ENCODE measurements at regions of chr12 and their contacts with region 1.

Region 1: GRCh38 chr12:53267999-53268647 is at the start of gene ESPL1:
- DNase-seq: peak; percentile 81
- H3K4me3 Mint-ChIP-seq: peak within 1 kb of the TSS; percentile 90
- H3K27ac Mint-ChIP-seq: peak within 1 kb of the TSS; percentile 88
- H3K4me1 Mint-ChIP-seq: peaks cover 43% of the 10 kb centered on the region
- H3K27me3 Mint-ChIP-seq: no peaks in the 10 kb centered on the region
- total RNA-seq, gene ESPL1: 61.2 and 68.4 TPM in 2 replicates

Region 2: GRCh38 chr12:52980693-52981423 is 287.3 kb before region 1 on chr12:
- intact Hi-C with region 1: no loop called
- DNase-seq: peak; percentile 73
- H3K4me3 Mint-ChIP-seq: no peak overlapping the region
- H3K27ac Mint-ChIP-seq: no peak overlapping the region
- H3K4me1 Mint-ChIP-seq: no peaks in the 10 kb centered on the region
- H3K27me3 Mint-ChIP-seq: peaks cover 29% of the 10 kb centered on the region

Region 3: GRCh38 chr12:53180220-53180930 is 87.7 kb before region 1 on chr12 and contains the starts of genes CSAD and ZNF740:
- intact Hi-C with region 1: loop called (anchors 1 kb)
- DNase-seq: peak; percentile 97
- H3K4me3 Mint-ChIP-seq: peak within 1 kb of the TSS; percentile 88
- H3K27ac Mint-ChIP-seq: peak within 1 kb of the TSS; percentile 99
- H3K4me1 Mint-ChIP-seq: peaks cover 52% of the 10 kb centered on the region
- H3K27me3 Mint-ChIP-seq: no peaks in the 10 kb centered on the region
- total RNA-seq, gene CSAD: 21.7 and 22.6 TPM in 2 replicates
- total RNA-seq, gene ZNF740: 48.1 and 52.8 TPM in 2 replicates

Region 4: GRCh38 chr12:53220801-53221202 is 47.3 kb before region 1 on chr12:
- intact Hi-C with region 1: loop called (anchors 1 kb)
- DNase-seq: peak; percentile 83
- H3K4me3 Mint-ChIP-seq: peak overlapping the region; percentile 94
- H3K27ac Mint-ChIP-seq: peak overlapping the region; percentile 98
- H3K4me1 Mint-ChIP-seq: peaks cover 83% of the 10 kb centered on the region
- H3K27me3 Mint-ChIP-seq: peaks cover 2% of the 10 kb centered on the region

Region 5: DNA sequence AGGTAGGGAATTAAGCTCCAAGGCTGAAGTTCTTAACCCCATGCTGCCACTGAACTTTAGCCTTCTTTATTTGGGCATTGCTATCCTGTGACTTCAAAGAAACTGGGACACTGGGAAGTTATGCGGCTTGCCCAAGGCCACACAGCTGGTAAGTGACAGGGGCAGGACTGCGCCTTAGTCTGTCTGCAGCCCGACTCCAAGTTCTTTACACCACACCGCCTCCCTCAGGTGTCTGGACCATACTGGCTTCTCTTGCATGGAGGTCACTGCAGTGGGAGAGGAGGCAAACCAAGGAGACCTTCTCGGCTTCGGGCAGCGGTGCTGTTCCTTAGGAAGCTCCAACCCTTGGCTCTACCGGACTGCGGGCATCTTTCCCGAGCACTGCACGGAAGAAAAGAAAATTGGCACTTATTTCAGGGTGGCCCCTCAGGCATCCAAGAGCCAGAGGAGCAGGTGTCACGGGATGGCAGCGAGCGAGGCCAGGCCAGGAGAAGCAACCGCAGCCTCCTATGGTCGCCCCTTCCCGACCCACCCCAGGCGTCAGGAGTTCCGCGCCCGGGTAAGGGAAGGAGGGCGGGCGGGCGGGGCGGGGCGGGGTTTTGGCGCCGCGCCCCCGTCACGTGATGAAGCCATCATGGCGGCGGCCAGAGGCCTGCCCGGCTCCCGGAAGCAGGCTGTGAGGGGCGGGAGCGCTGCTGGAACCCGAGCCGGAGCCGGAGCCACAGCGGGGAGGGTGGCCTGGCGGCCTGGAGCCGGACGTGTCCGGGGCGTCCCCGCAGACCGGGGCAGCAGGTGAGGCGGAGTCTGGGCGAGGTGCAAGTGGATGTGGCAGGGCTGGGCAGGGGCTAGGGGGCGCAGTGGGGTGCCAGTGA is 16.4 kb before region 1 on chr12:
- intact Hi-C with region 1: loop called (anchors 1 kb)
- DNase-seq: peak; percentile 69
- H3K4me3 Mint-ChIP-seq: peak overlapping the region; percentile 99
- H3K27ac Mint-ChIP-seq: peak overlapping the region; percentile 88
- H3K4me1 Mint-ChIP-seq: peaks cover 50% of the 10 kb centered on the region
- H3K27me3 Mint-ChIP-seq: peaks cover 2% of the 10 kb centered on the region

Region 6: DNA sequence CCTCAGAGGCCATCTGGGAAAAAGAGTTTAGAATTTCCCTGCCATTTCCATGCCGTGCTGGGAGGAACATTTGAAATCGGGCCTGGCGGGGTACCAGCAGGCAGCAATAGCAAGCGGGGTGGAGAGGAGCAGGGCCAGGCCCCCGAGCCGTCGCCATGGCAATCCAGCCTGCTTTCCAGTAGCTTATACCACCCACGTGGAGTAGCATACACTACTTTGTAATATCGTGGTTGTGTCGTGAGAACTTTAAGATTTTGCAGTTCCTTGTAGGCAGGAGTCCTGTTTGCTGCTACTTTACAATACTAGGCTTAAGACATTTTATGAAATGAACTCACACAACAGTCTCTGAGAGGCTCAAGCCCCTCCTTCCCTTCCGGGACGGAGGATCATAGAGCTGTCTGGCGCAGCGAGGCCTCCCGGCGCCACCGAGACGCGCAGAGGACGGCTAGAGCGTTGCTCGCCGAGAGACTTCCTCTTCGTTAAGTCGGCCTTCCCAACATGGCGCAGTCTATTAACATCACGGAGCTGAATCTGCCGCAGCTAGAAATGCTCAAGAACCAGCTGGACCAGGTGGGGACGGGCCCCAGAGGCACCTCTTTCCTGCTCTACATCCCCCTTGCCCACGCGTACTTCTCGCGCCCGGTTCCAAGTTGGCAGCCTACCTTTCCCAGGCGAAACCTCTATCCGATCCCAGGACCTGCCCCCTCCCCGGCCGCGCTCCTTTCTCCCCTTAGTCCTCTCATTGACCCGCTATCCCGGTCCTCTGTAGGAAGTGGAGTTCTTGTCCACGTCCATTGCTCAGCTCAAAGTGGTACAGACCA is 27.2 kb after region 1 on chr12 and contains the start of gene PFDN5:
- intact Hi-C with region 1: loop called (anchors 1 kb)
- DNase-seq: peak; percentile 86
- H3K4me3 Mint-ChIP-seq: peak within 1 kb of the TSS; percentile 99
- H3K27ac Mint-ChIP-seq: peak within 1 kb of the TSS; percentile 91
- H3K4me1 Mint-ChIP-seq: peaks cover 50% of the 10 kb centered on the region
- H3K27me3 Mint-ChIP-seq: no peaks in the 10 kb centered on the region
- total RNA-seq, gene PFDN5: 344 and 350 TPM in 2 replicates

Measured in activated T-helper 1 cell treated with anti-CD3 and anti-CD28 coated beads, Interleukin-12 subunit alpha, Interleukin-12 subunit beta, Interleukin-2, Interleukin-4 antibody, amounts not matched to agents 30 ng/mL and 10 ng/mL and 1 ng/mL, durations not matched to agents 14 hours and 24 hours and 36 hours (primary cell).